K562 (cell line): ENCODE measurements at regions of chr18 and their contacts with region 1.

Region 1: DNA sequence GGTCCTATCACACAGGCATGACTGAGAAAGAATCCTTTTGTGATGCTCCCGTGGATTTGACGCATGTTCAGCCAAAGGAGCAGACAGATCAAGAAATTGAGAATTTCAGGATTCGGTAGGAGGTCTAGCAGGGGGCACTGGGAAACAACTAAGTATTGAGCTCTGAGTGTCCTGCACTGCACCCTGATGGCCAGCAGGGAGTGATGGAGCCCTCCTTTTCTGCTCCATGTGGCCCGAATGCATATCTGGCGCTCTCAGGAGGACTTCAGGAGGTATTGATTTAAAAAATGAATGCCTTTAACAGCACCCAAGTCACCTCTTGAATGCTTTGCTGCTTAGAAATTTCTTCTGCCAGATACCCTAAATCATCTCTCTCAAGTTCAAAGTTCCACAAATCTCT is 58.0 kb downstream of the ZNF519 start:
- DNase-seq: peak; percentile 23 to 39 (median 30)
- ATAC-seq: peak; percentile 96
- H3K4me3 ChIP-seq: no peak overlapping the region
- H3K27ac ChIP-seq: no peak overlapping the region
- H3K4me1 ChIP-seq: no peaks in the 10 kb centered on the region
- H3K27me3 ChIP-seq: no peaks in the 10 kb centered on the region
- CTCF ChIP-seq: peak; percentile 40 to 93 (median 65); a peak in 5 of 6 replicates
- EP300 ChIP-seq: no peak
- POLR2A ChIP-seq: no peak
- RAD21 ChIP-seq: peak in 1 of 2 experiments; percentile 34; a peak in 2 of 4 replicates

Region 2: DNA sequence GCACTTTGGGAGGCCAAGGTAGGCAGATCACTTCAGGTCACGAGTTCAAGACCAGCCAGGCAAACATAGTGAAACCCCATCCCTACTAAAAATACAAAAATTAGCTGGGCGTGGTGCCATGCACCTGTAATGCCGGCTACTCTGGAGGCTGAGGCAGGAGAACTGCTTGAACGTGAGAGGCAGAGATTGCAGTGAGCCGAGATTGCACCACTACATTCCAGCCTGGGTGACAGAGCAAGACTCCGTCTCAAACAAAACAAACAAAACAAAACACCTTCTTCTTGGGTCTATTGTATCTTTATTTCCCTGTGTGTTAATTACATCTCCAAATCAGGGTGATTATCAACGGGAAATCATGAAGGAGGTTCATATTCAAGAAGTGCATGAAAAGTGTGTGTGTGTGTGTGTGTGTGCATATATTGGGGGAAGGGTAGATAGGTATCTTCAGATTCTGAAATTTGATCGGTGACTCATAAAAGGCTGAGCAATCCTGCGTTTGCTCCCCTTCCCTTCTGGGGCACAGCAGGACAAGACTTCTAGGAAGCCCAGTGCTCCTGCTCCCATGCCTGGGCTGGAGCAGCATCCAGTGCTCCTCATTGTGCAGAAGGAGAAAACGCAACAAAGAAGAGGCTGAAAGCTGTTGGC is 224.5 kb before region 1 on chr18:
- CTCF ChIA-PET with region 1: no interaction called
- POLR2A ChIA-PET with region 1: no interaction called
- in situ Hi-C with region 1: no loop called
- intact Hi-C with region 1: no loop called
- DNase-seq: no peak
- ATAC-seq: no peak
- H3K4me3 ChIP-seq: no peak overlapping the region
- H3K27ac ChIP-seq: no peak overlapping the region
- H3K4me1 ChIP-seq: no peaks in the 10 kb centered on the region
- H3K27me3 ChIP-seq: no peaks in the 10 kb centered on the region
- CTCF ChIP-seq: no peak
- EP300 ChIP-seq: no peak
- POLR2A ChIP-seq: no peak
- RAD21 ChIP-seq: no peak

Region 3: DNA sequence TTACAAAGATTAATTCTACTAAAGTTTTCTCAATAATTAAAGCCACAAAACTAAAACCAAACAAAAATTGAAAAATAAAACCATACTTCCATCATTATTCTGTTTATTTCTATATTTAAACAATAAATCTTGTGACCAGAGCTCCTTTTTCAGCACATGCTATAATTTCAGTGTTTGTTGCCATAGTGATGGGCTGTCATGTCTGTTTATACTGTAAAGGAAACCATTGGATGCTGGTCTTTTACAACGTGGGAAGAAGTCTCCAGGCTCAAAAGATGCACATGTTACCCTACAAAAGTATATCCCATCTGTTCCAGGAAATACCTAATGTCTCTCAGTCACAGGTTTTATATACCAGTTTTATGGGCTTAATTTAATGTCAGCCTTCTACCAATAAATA is 58.8 kb before region 1 on chr18:
- CTCF ChIA-PET with region 1: no interaction called
- POLR2A ChIA-PET with region 1: no interaction called
- in situ Hi-C with region 1: no loop called
- intact Hi-C with region 1: loop called (anchors 5 kb)
- DNase-seq: no peak
- ATAC-seq: no peak
- H3K4me3 ChIP-seq: no peak overlapping the region
- H3K27ac ChIP-seq: no peak overlapping the region
- H3K4me1 ChIP-seq: no peaks in the 10 kb centered on the region
- H3K27me3 ChIP-seq: no peaks in the 10 kb centered on the region
- CTCF ChIP-seq: no peak
- EP300 ChIP-seq: no peak
- POLR2A ChIP-seq: no peak
- RAD21 ChIP-seq: no peak